ENCODE measurements at regions of chr1 and their contacts with region 1.

Region 1: DNA sequence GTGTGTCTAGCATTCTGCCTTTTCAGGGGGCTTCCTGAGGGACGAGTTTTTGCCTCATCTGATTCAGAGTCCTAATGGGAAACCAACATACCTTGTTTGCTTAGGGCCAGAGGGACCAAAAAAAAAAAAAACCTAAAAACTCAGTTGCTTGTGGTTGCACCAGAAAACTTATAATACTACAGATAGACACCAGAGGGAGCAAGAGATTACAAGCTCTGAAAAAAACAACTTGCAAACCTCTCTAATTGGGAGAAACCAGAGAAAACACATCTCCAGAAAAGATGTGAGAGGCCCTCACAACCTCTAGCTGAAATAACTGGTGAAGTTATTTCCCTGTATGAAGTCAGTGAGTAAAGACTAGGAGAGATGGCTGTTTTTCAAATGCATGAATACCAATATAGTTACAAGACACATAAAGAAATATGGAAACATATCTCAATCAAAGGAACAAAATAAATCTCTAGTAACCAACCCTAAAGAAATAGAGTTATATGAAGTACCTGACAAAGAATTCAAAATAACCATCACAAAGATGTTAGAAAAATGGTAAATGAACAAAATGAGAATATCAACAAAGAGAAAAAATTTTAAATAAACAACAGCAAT is 233.7 kb upstream of the NFIA start:
- DNase-seq: no peak

Region 2: GRCh38 chr1:60558236-60558635 is 290.4 kb before region 1 on chr1:
- intact Hi-C with region 1: no loop called
- DNase-seq: no peak

Region 3: DNA sequence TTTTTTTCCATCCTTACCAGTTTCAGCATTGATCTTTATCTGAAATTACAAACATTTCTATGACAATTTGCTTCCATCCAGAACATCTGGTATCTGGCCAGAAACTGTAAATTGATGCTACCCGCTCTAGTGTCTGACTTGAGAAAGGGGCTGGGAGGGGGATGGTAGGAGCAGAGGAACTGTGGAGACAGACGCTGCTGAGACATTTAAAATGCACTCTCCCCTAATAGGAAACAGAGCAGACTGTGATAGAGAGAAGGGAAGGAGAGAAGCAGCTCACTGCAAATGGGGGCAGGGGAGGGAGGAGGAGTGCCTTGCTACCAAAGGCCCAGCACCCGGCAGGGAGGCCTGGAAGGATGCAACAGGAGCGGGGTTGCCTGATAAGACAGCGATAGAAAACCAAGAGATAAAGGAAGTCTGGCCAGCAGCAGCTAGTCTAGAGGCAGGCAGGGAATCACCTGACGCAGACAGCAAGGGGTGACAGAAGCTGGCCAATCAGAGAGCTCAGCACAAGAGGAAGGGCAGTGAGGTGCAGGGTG is 38.2 kb after region 1 on chr1:
- intact Hi-C with region 1: no loop called
- DNase-seq: no peak

Region 4: DNA sequence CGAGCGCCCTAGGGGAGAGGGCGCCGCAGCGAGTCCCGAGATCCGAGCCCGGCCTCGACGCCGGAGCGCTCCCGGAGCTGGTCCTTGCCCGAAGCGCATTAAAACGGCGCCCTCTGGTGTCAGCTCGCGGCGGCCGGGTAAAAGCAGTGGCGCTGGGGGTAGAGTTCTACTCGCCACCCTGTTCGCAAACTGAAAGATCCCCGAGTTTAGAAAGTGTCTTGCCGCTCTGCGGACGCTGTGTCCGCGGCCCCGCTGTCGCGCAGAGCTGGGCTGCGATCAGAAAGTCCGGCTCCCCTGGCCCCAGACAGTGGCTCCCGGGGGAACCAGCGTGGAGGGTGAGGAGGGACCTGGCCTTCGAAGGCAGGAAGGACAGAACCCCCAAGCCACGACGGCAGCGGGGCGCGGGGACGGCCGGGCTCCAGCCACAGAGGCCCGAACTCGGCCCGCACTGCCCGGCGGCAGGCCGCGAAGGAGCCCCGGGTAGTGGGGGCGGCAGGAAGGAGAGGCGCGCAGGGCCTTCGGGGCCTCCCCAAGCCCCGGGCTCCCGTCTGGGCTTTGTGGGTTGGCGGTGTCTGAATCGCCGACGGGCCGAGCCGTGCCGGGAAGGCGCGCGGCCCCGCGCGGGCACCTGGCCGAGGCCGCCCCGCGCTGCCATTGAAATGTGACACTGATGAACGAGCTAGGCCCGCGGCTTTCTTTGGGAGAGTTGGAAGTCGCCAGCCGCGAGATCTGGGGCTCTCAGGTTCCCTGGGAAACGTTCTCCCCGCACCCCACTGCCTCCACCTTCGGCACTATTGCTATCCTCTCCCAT is 194.5 kb after region 1 on chr1:
- intact Hi-C with region 1: loop called (anchors 1 kb)
- DNase-seq: peak; percentile 94

Region 5: GRCh38 chr1:61851849-61852669 is 1003.4 kb after region 1 on chr1:
- intact Hi-C with region 1: loop called (anchors 5 kb)
- DNase-seq: no peak